Body of pancreas (tissue), 4 donors: ENCODE measurements at regions of chr14 and their contacts with region 1.

Region 1: GRCh38 chr14:100645192-100645990 is 58.2 kb upstream of the BEGAIN start:
- DNase-seq: peak; percentile 92 to 94 (median 94)
- ATAC-seq: peak; percentile 88
- H3K4me3 ChIP-seq: no peak overlapping the region
- H3K27ac ChIP-seq: no peak overlapping the region
- H3K4me1 ChIP-seq: peaks cover 26% of the 10 kb centered on the region
- H3K27me3 ChIP-seq: no peaks in the 10 kb centered on the region
- CTCF ChIP-seq: peak; percentile 74 to 95 (median 90)
- POLR2A ChIP-seq: no peak

Region 2: DNA sequence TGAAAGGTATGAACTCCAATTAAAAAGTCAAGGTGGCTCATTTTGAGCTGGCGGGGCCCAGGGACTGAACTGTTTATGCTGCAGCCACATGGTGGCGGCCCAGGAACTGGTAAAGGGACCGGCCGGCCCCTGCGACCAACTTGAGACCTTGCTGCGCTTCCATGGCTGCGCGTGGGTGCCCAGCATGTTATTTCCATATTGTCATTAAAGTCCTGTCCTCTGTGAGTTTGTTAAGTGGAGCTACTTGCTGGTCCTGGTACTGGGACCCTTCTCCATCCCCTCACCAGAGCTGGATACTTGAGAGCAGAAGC is 120.5 kb before region 1 on chr14:
- intact Hi-C with region 1: loop called (anchors 10 kb)
- DNase-seq: peak; percentile 62 to 87 (median 76)
- ATAC-seq: peak; percentile 80
- H3K4me3 ChIP-seq: no peak overlapping the region
- H3K27ac ChIP-seq: no peak overlapping the region
- H3K4me1 ChIP-seq: peaks cover 5% of the 10 kb centered on the region
- H3K27me3 ChIP-seq: no peaks in the 10 kb centered on the region
- CTCF ChIP-seq: peak; percentile 45 to 86 (median 62)
- POLR2A ChIP-seq: no peak